ENCODE measurements at regions of chr2 and their contacts with region 1.

Region 1: DNA sequence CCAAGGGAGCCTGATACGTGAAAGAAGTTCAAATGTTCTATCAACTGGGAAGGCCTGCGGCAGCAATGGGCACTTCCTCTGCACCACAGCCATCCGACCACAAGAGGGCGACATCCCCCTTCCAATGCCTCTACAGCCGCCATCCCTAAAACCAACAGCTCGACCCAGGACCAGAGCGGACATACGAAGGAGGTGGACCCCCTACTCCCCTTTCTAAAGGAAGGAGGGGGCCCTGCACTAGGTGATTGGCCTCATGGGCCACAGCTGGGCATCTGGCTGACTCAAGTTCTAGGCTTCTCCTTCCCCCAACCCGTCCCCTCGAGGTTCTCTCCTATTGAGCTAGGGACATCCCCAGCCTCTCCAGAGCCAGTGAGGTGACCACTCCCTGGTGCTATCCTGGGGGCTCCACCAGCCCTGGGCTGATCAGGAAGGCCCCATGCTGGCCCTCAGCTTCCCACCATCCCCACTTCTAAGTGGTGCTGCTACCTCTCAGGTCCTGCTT is 217.2 kb downstream of the TNS1 start:
- DNase-seq: peak; percentile 29
- H3K4me3 ChIP-seq: no peak overlapping the region
- H3K27ac ChIP-seq: no peak overlapping the region
- H3K27me3 ChIP-seq: no peaks in the 10 kb centered on the region
- CTCF ChIP-seq: peak; percentile 96

Region 2: DNA sequence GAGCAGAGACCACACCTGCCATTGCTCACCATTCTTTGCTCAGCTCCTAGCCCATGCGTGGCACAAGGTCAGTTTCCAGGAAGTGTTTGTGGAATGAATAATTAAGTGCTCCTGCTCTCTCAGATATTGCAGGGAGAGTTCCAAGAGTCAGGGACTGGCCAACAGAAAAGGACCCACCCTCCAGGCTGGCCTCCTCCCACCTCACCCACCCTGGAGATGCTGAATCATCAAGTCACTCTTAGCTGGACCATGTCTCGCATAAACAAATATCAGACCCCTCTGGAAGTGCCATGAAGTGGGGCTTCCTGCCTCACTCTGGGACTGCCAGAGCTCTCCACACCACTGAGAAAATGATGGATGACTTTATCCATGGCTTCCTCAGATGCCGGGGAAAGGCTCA is 38.8 kb before region 1 on chr2:
- CTCF ChIA-PET with region 1: no interaction called
- POLR2A ChIA-PET with region 1: no interaction called
- DNase-seq: no peak
- H3K4me3 ChIP-seq: no peak overlapping the region
- H3K27ac ChIP-seq: no peak overlapping the region
- H3K27me3 ChIP-seq: peaks cover 4% of the 10 kb centered on the region
- CTCF ChIP-seq: no peak

Region 3: GRCh38 chr2:217798743-217799562 is 13.4 kb after region 1 on chr2:
- CTCF ChIA-PET with region 1: interaction called, 19 read pairs
- POLR2A ChIA-PET with region 1: no interaction called
- DNase-seq: no peak
- H3K4me3 ChIP-seq: no peak overlapping the region
- H3K27ac ChIP-seq: no peak overlapping the region
- H3K27me3 ChIP-seq: no peaks in the 10 kb centered on the region
- CTCF ChIP-seq: no peak

Region 4: DNA sequence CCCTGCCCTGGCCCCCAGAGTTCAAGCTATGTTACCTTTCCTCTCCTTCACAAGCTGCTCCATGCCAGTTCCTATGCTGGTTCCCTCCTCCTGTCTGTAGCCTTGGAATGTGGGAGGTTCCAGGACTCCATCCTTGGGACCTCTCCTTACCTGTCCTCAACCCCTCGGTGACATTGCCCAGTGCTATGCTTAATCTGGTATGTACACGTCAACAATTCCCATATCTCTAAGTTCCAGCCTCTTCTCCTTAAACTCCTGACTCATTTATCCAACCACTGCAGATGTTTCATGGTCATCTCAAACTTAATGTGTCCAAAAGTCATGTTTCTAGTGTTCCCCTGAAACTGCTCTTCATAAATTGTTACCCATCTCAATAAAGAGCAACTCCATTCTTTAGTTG is 56.4 kb after region 1 on chr2:
- CTCF ChIA-PET with region 1: no interaction called
- POLR2A ChIA-PET with region 1: no interaction called
- DNase-seq: no peak
- H3K4me3 ChIP-seq: no peak overlapping the region
- H3K27ac ChIP-seq: no peak overlapping the region
- H3K27me3 ChIP-seq: no peaks in the 10 kb centered on the region
- CTCF ChIP-seq: no peak

Region 5: GRCh38 chr2:217880287-217880889 is 94.8 kb after region 1 on chr2:
- CTCF ChIA-PET with region 1: interaction called, 97 read pairs
- POLR2A ChIA-PET with region 1: no interaction called
- DNase-seq: no peak
- H3K4me3 ChIP-seq: no peak overlapping the region
- H3K27ac ChIP-seq: no peak overlapping the region
- H3K27me3 ChIP-seq: no peaks in the 10 kb centered on the region
- CTCF ChIP-seq: 0 out of 2 replicates have a peak, but pooled peaks have one; percentile 17

Region 6: DNA sequence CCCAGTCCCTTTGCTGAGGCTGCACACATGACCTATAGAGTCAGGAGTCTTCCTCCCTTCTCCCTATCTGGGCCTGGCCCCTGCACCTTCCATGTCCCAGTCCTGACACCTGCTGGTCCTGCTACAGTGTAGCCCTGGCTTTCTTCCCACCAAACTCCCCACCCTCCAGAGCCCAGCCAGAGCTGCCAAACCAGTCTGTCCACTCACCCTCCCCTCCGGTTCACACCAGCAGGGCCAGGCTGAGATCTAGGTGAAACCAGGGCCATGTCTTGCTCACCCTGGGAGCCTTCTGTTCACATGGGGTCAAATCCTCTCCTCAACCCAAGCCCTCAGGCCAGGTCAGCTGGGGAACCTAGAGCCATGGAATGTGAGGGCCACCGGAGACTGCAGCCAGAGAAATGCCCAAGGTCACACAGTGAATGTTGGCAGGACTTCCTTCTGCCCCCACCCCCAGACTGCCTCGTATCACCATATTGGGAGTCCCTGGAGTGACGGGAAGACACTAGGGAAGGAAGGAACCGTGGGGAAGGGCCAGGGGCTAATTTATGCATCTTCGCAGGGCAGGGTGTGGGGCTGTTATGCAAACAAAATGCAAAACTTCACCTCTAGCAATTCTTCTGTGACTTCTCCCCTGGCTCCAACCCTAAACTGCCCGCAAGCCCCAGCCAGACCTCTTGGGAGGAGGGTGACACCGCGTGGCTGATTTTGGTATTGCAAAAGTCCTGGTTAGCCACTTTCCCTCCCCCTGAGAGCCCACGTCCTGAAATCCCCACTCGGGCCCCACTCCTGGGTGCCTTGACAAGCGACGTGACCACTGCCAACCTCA is 202.6 kb after region 1 on chr2:
- CTCF ChIA-PET with region 1: interaction called, 21 read pairs
- POLR2A ChIA-PET with region 1: no interaction called
- DNase-seq: no peak
- H3K4me3 ChIP-seq: no peak overlapping the region
- H3K27ac ChIP-seq: no peak overlapping the region
- H3K27me3 ChIP-seq: no peaks in the 10 kb centered on the region
- CTCF ChIP-seq: peak; percentile 93

Region 7: DNA sequence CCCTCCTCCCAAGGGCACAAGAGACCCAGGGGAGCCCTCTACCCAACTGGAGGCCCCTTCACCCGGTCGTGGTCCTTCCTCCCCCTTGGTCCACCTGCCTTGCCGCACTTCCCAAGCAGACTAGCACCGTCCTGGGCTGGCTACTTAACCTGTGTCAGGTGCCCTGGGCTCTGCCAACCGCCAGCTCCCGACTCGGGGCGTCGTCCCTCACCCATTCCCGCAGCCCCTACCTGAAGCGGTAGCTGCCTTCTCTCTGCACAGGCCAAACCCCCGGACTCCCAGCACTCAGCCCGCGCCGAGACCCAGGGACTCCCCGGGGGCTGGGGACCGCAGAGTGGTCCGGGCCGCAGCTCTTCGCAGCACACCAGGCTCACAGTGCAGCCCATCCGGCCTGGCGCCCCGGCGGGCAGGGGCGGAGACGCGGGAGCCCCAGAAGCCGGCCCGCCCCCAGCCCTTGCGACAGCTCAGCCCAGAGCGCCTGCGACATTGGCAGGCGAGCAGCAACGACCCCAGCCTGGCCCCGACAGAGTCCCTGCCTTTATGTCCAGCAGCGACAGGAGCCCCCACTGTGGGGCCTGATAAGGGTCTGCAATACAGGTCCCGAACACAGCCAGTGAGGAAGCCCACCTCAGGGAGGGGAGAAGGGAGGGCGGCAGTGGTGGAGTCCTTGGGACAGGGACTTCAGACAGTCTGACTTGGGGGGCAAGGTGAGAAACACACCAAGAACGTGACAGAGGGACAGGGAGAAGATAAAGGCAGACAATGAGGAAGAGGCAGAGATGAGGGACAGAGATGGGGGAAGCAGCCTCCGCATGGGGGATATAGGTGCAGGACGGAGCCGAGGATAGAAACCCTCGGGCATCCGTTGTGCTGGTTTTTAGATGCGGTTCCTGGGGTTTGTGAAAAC is 248.2 kb after region 1 on chr2:
- CTCF ChIA-PET with region 1: interaction called, 145 read pairs
- POLR2A ChIA-PET with region 1: no interaction called
- DNase-seq: no peak
- H3K4me3 ChIP-seq: no peak overlapping the region
- H3K27ac ChIP-seq: no peak overlapping the region
- H3K27me3 ChIP-seq: peaks cover 20% of the 10 kb centered on the region
- CTCF ChIP-seq: no peak

Region 8: GRCh38 chr2:218074031-218074430 is 288.4 kb after region 1 on chr2:
- CTCF ChIA-PET with region 1: interaction called, 54 read pairs
- POLR2A ChIA-PET with region 1: no interaction called
- DNase-seq: no peak
- H3K4me3 ChIP-seq: no peak overlapping the region
- H3K27ac ChIP-seq: no peak overlapping the region
- H3K27me3 ChIP-seq: peaks cover 39% of the 10 kb centered on the region
- CTCF ChIP-seq: peak; percentile 65

Measured in AG04450 (cell line).